ENCODE measurements at regions of chr6 and their contacts with region 1.

Region 1: GRCh38 chr6:29737707-29738630 is 14.7 kb downstream of the HLA-F start:
- DNase-seq: no peak
- ATAC-seq: peak; percentile 92
- H3K4me3 ChIP-seq: no peak overlapping the region
- H3K27ac ChIP-seq: no peak overlapping the region
- H3K4me1 ChIP-seq: no peaks in the 10 kb centered on the region
- H3K27me3 ChIP-seq: no peaks in the 10 kb centered on the region
- CTCF ChIP-seq: peak; percentile 84 to 88 (median 86)
- EP300 ChIP-seq: no peak
- POLR2A ChIP-seq: no peak
- RAD21 ChIP-seq: peak; percentile 87

Region 2: DNA sequence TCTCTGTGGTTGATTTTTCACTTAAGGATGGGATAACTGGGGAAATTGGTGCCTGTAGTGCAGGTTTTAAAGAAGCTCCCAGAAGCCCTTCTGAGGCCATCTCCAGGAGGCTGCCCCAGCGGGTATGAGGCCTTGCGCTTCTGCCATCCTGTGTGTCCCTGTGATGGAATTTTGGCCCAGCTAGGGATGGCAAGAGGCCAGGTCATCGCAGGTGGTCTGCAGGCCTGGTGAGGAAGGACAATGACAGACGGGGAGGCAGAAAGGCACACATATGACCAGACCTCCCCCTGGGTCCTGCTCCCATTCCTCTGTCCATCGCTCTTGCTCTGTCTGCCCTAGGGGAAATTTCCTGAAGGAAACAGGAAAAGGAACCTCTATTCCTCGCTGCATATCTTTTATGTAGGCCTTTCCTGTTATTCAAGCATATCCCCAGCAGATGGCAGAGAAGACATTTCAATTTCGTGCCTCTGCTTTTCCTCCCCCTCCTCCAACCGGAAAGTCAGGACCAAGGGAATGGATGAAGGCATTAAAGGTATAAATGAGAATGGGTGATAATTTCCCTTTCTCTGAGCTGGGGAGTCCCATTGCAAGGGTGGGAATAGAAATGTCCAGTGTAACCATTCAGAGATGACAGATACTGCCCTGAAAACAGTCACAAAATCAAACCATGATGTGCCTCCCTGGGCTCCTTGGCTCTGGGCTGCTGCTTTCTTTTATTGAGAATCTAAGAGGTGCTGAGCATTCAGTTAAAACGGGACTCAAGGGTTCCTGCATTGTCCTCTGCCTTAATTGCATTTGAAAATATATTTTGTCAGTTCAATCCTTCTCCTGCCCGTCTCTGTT is 32.4 kb before region 1 on chr6:
- CTCF ChIA-PET with region 1: interaction called, 8 read pairs
- POLR2A ChIA-PET with region 1: interaction called, 3 read pairs
- RAD21 ChIA-PET with region 1: no interaction called
- SMC1A ChIA-PET with region 1: interaction called, 8 read pairs
- in situ Hi-C with region 1: no loop called
- intact Hi-C with region 1: loop called (anchors 1 kb)
- DNase-seq: no peak
- ATAC-seq: no peak
- H3K4me3 ChIP-seq: no peak overlapping the region
- H3K27ac ChIP-seq: no peak overlapping the region
- H3K4me1 ChIP-seq: peaks cover 11% of the 10 kb centered on the region; the same call in 1 of the 2 replicates
- H3K27me3 ChIP-seq: no peaks in the 10 kb centered on the region
- CTCF ChIP-seq: peak; percentile 34 to 54 (median 46); a peak in 5 of 6 replicates
- EP300 ChIP-seq: no peak
- POLR2A ChIP-seq: no peak
- RAD21 ChIP-seq: peak; percentile 60

Region 3: GRCh38 chr6:29723262-29723665 is 14.7 kb before region 1 on chr6 and contains the start of gene HLA-F:
- CTCF ChIA-PET with region 1: interaction called, 24 read pairs
- POLR2A ChIA-PET with region 1: interaction called, 7 read pairs
- RAD21 ChIA-PET with region 1: interaction called, 3 read pairs
- SMC1A ChIA-PET with region 1: interaction called, 24 read pairs
- in situ Hi-C with region 1: no loop called
- intact Hi-C with region 1: no loop called
- DNase-seq: peak; percentile 92
- ATAC-seq: peak; percentile 89
- H3K4me3 ChIP-seq: peak within 1 kb of the TSS; percentile 98
- H3K27ac ChIP-seq: peak within 1 kb of the TSS; percentile 99
- H3K4me1 ChIP-seq: peaks cover 15% of the 10 kb centered on the region
- H3K27me3 ChIP-seq: no peaks in the 10 kb centered on the region
- CTCF ChIP-seq: 0 out of 6 replicates have a peak, but pooled peaks of 1 of the 3 experiments have one; percentile 5
- EP300 ChIP-seq: 0 out of 4 replicates have a peak, but pooled peaks of 1 of the 2 experiments have one; percentile 27
- POLR2A ChIP-seq: peak; percentile 79
- RAD21 ChIP-seq: no peak
- polyA plus RNA-seq, gene HLA-F: 30.1 to 107 TPM

Region 4: GRCh38 chr6:29752451-29753308 is 14.7 kb after region 1 on chr6:
- CTCF ChIA-PET with region 1: interaction called, 117 read pairs
- POLR2A ChIA-PET with region 1: interaction called, 6 read pairs
- RAD21 ChIA-PET with region 1: interaction called, 11 read pairs
- SMC1A ChIA-PET with region 1: interaction called, 17 read pairs
- in situ Hi-C with region 1: no loop called
- intact Hi-C with region 1: no loop called
- DNase-seq: peak; percentile 54
- ATAC-seq: peak; percentile 85
- H3K4me3 ChIP-seq: peak overlapping the region; percentile 66
- H3K27ac ChIP-seq: peak overlapping the region; percentile 84
- H3K4me1 ChIP-seq: peaks cover 10% of the 10 kb centered on the region
- H3K27me3 ChIP-seq: no peaks in the 10 kb centered on the region
- CTCF ChIP-seq: peak; percentile 99 to 100 (median 100); a peak in 5 of 6 replicates
- EP300 ChIP-seq: no peak
- POLR2A ChIP-seq: peak; percentile 58; the same call in 1 of the 2 replicates
- RAD21 ChIP-seq: peak; percentile 83

Region 5: DNA sequence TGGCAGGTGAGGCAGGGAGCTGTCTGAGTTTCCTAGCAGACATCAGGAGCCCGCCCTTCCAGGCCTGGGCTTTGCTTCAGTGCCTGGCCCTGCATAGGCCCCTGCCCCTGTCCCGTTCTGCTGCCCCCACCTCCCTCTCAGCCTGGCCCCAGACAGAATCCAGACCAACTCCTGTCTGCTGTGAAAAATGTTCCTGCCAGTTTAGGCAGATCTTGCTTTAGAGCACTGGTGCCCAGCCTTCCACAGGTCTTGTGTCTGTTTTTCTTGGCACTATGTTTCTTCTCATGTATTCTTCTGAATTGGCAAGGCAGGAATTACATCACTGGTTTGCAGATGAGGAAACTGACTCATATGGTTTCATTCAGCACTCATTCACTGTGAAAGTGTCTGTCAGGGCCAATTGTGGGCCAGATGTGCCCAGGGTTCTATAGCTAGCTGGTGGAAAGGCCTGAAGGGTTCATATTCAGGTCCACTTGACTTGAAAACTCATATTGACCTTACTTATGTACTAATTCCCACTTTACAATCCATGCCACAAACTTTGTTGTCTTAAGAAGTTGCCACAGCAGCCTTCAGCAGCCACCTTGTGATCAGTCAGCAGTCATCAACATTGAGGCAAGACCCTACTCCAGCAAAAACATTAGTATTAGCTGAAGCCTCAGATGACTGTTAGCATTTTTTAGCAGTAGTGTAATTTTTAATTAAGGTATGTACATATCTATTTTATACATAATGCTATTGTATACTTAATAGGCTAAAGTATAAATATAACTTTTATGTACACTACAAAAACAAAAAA is 25.7 kb after region 1 on chr6:
- CTCF ChIA-PET with region 1: interaction called, 22 read pairs
- POLR2A ChIA-PET with region 1: no interaction called
- RAD21 ChIA-PET with region 1: interaction called, 3 read pairs
- SMC1A ChIA-PET with region 1: interaction called, 4 read pairs
- in situ Hi-C with region 1: no loop called
- intact Hi-C with region 1: no loop called
- DNase-seq: no peak
- ATAC-seq: peak; percentile 86
- H3K4me3 ChIP-seq: no peak overlapping the region
- H3K27ac ChIP-seq: no peak overlapping the region
- H3K4me1 ChIP-seq: peaks cover 8% of the 10 kb centered on the region
- H3K27me3 ChIP-seq: no peaks in the 10 kb centered on the region
- CTCF ChIP-seq: no peak
- EP300 ChIP-seq: no peak
- POLR2A ChIP-seq: no peak
- RAD21 ChIP-seq: no peak

Region 6: GRCh38 chr6:29809249-29809648 is 71.3 kb after region 1 on chr6:
- CTCF ChIA-PET with region 1: interaction called, 11 read pairs
- POLR2A ChIA-PET with region 1: no interaction called
- RAD21 ChIA-PET with region 1: interaction called, 3 read pairs
- SMC1A ChIA-PET with region 1: interaction called, 4 read pairs
- in situ Hi-C with region 1: no loop called
- intact Hi-C with region 1: no loop called
- DNase-seq: no peak
- ATAC-seq: no peak
- H3K4me3 ChIP-seq: no peak overlapping the region
- H3K27ac ChIP-seq: no peak overlapping the region
- H3K4me1 ChIP-seq: no peaks in the 10 kb centered on the region
- H3K27me3 ChIP-seq: no peaks in the 10 kb centered on the region; a peak in 1 of 4 replicates
- CTCF ChIP-seq: no peak
- EP300 ChIP-seq: no peak
- POLR2A ChIP-seq: no peak
- RAD21 ChIP-seq: no peak

Region 7: GRCh38 chr6:29834564-29835436 is 96.8 kb after region 1 on chr6:
- CTCF ChIA-PET with region 1: interaction called, 57 read pairs
- POLR2A ChIA-PET with region 1: interaction called, 3 read pairs
- RAD21 ChIA-PET with region 1: interaction called, 15 read pairs
- SMC1A ChIA-PET with region 1: interaction called, 23 read pairs
- in situ Hi-C with region 1: loop called (anchors 5 kb)
- intact Hi-C with region 1: loop called (anchors 1 kb)
- DNase-seq: no peak
- ATAC-seq: peak; percentile 79
- H3K4me3 ChIP-seq: no peak overlapping the region
- H3K27ac ChIP-seq: no peak overlapping the region
- H3K4me1 ChIP-seq: no peaks in the 10 kb centered on the region
- H3K27me3 ChIP-seq: peaks cover 0 to 5% of the 10 kb centered on the region in 2 experiments; a peak in 2 of 4 replicates
- CTCF ChIP-seq: peak; percentile 65 to 78 (median 70)
- EP300 ChIP-seq: no peak
- POLR2A ChIP-seq: no peak
- RAD21 ChIP-seq: peak; percentile 78